ENCODE measurements at regions of chr12 and their contacts with region 1.

Region 1: GRCh38 chr12:118372541-118373495 is at the start of gene TAOK3:
- DNase-seq: peak; percentile 99
- total RNA-seq, gene TAOK3: 21.7 TPM

Region 2: GRCh38 chr12:118016424-118017264 is 356.2 kb before region 1 on chr12 and contains the start of gene RFC5:
- intact Hi-C with region 1: loop called (anchors 10 kb)
- DNase-seq: peak; percentile 99
- total RNA-seq, gene RFC5: 2.6 TPM

Region 3: DNA sequence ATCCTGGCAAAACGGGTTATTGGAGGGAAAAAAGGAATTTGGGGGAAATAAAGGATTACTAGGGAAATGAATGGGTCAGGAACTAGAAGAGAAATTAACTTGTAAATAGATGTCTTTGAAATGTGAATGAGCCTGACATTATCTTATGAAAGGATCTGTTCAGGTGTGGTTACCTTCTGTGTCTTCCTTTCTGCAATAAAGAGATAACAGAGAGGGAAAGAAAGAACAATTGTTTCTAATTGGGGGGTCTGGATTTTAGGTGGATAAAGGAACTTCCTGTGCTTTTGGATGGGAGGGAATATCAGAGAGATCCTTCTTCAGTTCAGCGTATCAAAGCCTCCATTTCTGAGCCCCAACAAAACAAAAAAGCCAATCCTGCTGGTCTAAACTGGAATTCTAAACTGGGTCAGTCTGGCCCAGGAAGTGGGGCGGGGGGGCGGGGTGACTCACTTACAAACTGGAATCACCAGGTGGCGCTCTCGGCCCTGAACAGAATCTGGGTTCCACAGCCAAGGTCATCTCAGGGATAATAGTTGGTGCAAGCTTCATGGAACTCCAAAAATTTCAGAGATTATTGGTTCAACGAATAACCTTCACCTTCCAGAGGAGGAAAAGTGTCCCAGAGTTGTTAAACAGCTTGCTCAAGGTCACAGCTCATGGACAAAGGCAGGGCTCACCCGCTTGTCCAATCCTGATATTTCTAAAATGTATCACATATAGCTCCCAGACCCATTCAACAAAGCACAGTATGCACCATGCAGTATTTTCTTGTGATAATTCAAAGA is 252.0 kb before region 1 on chr12:
- intact Hi-C with region 1: loop called (anchors 1 kb)
- DNase-seq: peak; percentile 87

Region 4: DNA sequence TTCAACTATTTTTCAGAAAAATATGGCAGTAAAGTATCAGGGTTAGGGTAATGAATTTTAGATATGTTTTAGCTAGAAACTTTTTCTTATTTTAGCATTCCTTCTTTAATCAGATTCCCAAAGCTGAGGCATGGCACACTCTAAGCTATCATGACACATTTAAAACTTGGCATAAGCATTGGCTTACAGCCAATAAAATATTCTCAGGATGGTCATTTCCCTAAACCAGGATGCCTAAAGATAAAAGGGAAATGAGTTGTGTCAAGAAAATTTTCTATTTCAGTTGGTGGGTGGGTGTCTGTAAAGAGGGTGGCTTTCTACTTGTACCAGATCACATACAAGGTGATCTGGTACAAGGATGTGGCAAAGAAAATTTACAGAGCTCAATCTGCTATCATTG is 189.1 kb before region 1 on chr12:
- intact Hi-C with region 1: loop called (anchors 1 kb)
- DNase-seq: no peak

Region 5: DNA sequence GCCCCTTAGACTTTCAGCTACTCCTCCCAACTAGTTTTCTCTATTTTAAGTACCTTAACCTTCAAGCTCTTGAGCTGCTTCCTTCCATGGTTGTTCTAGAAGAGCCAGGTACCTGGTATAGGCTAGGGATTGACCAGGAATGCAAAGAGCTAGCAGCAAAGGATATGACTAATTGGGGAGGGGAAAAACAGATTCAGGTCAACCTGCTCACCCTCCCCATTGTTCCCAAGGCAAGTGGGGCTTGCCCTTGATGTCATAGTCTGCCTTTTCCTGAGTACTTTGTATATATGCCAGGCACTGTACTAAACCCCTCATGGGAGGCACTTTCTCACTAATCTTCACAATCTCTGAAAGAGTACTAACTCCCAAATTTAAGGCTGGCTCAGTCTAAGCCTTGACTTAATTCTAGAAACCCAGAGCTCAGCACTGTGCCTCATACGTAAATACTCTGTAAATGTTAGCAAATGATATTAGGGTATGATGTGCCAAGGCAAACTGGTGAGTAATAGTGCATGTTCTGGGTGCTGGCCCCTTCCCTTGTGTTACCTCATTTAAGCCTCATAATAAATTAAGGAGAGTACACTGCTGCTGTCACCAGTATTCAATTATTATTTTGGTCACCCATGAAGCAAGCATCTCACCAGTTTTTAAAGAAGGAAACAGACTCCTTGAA is 45.7 kb after region 1 on chr12:
- intact Hi-C with region 1: no loop called
- DNase-seq: no peak

Region 6: GRCh38 chr12:118467641-118468305 is 95.0 kb after region 1 on chr12:
- intact Hi-C with region 1: no loop called
- DNase-seq: no peak